ENCODE measurements at regions of chr16 and their contacts with region 1.

Region 1: DNA sequence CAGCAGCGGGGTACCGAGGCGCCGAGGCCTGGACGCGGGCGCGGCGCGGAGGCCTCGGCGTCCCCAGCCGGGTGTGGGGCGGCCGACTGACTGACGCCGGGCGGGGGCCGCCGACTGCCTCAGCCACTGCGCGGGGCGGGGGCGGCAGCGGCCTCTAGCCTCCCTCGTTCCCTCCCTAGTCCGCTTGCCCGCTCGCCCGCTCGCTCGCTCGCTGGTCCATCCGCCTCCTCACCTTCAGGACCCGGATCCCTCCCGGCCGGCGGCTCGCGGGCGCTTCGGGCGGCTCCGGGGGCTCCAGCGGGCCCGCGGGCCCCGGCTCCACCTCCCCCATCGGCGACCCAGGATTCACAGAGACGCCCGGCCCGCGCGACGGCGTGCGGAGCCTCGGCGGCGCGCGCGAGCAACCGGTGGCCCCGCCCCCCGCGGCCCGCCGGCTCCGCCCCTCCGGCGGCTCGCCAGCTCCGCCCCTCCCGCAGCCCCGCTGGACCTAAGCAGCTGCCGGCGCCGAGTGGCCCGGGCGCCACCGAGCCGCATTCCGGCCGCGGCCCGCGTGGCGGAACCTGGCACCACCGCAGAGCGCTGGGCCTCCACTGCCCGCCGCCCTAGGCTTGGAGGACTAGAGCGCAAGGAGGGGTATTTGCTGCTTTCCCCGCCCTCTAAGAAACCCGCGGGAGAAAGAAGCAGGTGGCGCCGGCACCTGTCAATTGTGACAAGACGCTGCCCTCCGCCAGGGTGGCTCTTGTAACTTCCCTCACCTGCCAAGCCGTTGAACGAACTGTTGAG is 773 bp downstream of the PHLPP2 start:
- DNase-seq: peak; percentile 87 to 91 (median 88)
- H3K4me3 ChIP-seq: peak overlapping the region; percentile 45 to 54
- H3K4me3 Mint-ChIP-seq: peak overlapping the region; percentile 81 to 90 (median 88)
- H3K27ac ChIP-seq: peak overlapping the region; percentile 83
- H3K27ac Mint-ChIP-seq: peak overlapping the region; percentile 76 to 96 (median 89)
- H3K4me1 ChIP-seq: peaks cover 14% of the 10 kb centered on the region
- H3K4me1 Mint-ChIP-seq: peaks cover 7 to 20% (median 12%) of the 10 kb centered on the region in 4 donors
- H3K27me3 ChIP-seq: no peaks in the 10 kb centered on the region
- H3K27me3 Mint-ChIP-seq: peaks cover 0 to 1% of the 10 kb centered on the region in 2 donors

Region 2: GRCh38 chr16:72093448-72094265 is 369.9 kb after region 1 on chr16 and contains the starts of genes DHX38 and TXNL4B:
- CTCF ChIA-PET with region 1: no interaction called
- POLR2A ChIA-PET with region 1: interaction called, 4 read pairs
- intact Hi-C with region 1: loop called (anchors 10 kb)
- DNase-seq: peak; percentile 92 to 97 (median 94)
- H3K4me3 ChIP-seq: peak within 1 kb of the TSS; percentile 82 to 88
- H3K4me3 Mint-ChIP-seq: peak within 1 kb of the TSS; percentile 97 to 100 (median 100)
- H3K27ac ChIP-seq: peak within 1 kb of the TSS; percentile 90
- H3K27ac Mint-ChIP-seq: peak within 1 kb of the TSS; percentile 90 to 100 (median 100)
- H3K4me1 ChIP-seq: peaks cover 43% of the 10 kb centered on the region
- H3K4me1 Mint-ChIP-seq: peaks cover 39 to 62% (median 47%) of the 10 kb centered on the region in 4 donors
- H3K27me3 ChIP-seq: no peaks in the 10 kb centered on the region
- H3K27me3 Mint-ChIP-seq: no peaks in the 10 kb centered on the region
- total RNA-seq, gene DHX38: 109 to 120 TPM
- total RNA-seq, gene TXNL4B: 23.7 to 26.1 TPM